ENCODE measurements at regions of chr1 and their contacts with region 1.

Region 1: GRCh38 chr1:184754476-184755225 is at the start of gene EDEM3:
- DNase-seq: peak; percentile 89 to 100 (median 98)
- ATAC-seq: peak; percentile 92 to 95 (median 93)
- H3K4me3 ChIP-seq: peak within 1 kb of the TSS; percentile 84 to 95
- H3K4me3 Mint-ChIP-seq: peak within 1 kb of the TSS; percentile 83 to 90 (median 88)
- H3K27ac ChIP-seq: peak within 1 kb of the TSS; percentile 73
- H3K27ac Mint-ChIP-seq: peak within 1 kb of the TSS; percentile 75 to 88
- H3K4me1 ChIP-seq: peaks cover 5 to 18% of the 10 kb centered on the region in 2 experiments
- H3K4me1 Mint-ChIP-seq: peaks cover 41 to 54% (median 50%) of the 10 kb centered on the region in 3 donors
- H3K27me3 ChIP-seq: no peaks in the 10 kb centered on the region
- H3K27me3 Mint-ChIP-seq: no peaks in the 10 kb centered on the region
- total RNA-seq, gene EDEM3: 21.0 to 44.1 (median 39.1) TPM

Region 2: GRCh38 chr1:184716158-184716557 is 38.5 kb before region 1 on chr1:
- CTCF ChIA-PET with region 1: no interaction called
- POLR2A ChIA-PET with region 1: no interaction called
- DNase-seq: no peak
- ATAC-seq: no peak
- H3K4me3 ChIP-seq: no peak overlapping the region
- H3K4me3 Mint-ChIP-seq: no peak overlapping the region
- H3K27ac ChIP-seq: no peak overlapping the region
- H3K27ac Mint-ChIP-seq: no peak overlapping the region
- H3K4me1 ChIP-seq: no peaks in the 10 kb centered on the region
- H3K4me1 Mint-ChIP-seq: peaks cover 0 to 3% (median 0%) of the 10 kb centered on the region in 3 donors
- H3K27me3 ChIP-seq: no peaks in the 10 kb centered on the region
- H3K27me3 Mint-ChIP-seq: no peaks in the 10 kb centered on the region

Region 3: GRCh38 chr1:184743062-184743756 is 11.4 kb before region 1 on chr1:
- CTCF ChIA-PET with region 1: interaction called in 1 of 2 experiments, 6 read pairs
- POLR2A ChIA-PET with region 1: interaction called in 1 of 2 experiments, 27 read pairs
- DNase-seq: peak in 19 of 35 experiments; percentile 5 to 81 (median 26)
- ATAC-seq: peak; percentile 94 to 99 (median 98)
- H3K4me3 ChIP-seq: no peak overlapping the region
- H3K4me3 Mint-ChIP-seq: peak overlapping the region; percentile 31 to 59 (median 41)
- H3K27ac ChIP-seq: peak overlapping the region; percentile 80
- H3K27ac Mint-ChIP-seq: peak overlapping the region; percentile 89 to 94
- H3K4me1 ChIP-seq: peaks cover 8 to 38% of the 10 kb centered on the region in 2 experiments
- H3K4me1 Mint-ChIP-seq: peaks cover 58 to 75% (median 71%) of the 10 kb centered on the region in 3 donors
- H3K27me3 ChIP-seq: no peaks in the 10 kb centered on the region
- H3K27me3 Mint-ChIP-seq: no peaks in the 10 kb centered on the region

Region 4: GRCh38 chr1:185044981-185045813 is 290.5 kb after region 1 on chr1 and contains the start of gene RNF2:
- CTCF ChIA-PET with region 1: interaction called in 1 of 2 experiments, 5 read pairs
- POLR2A ChIA-PET with region 1: interaction called, 6 to 12 read pairs
- DNase-seq: peak; percentile 65 to 90 (median 79)
- ATAC-seq: peak; percentile 90 to 95 (median 92)
- H3K4me3 ChIP-seq: peak within 1 kb of the TSS; percentile 61 to 76
- H3K4me3 Mint-ChIP-seq: peak within 1 kb of the TSS; percentile 93 to 98 (median 94)
- H3K27ac ChIP-seq: peak within 1 kb of the TSS; percentile 81
- H3K27ac Mint-ChIP-seq: peak within 1 kb of the TSS; percentile 93 to 96
- H3K4me1 ChIP-seq: peaks cover 9 to 10% of the 10 kb centered on the region in 2 experiments
- H3K4me1 Mint-ChIP-seq: peaks cover 49 to 52% (median 50%) of the 10 kb centered on the region in 3 donors
- H3K27me3 ChIP-seq: no peaks in the 10 kb centered on the region
- H3K27me3 Mint-ChIP-seq: no peaks in the 10 kb centered on the region
- total RNA-seq, gene RNF2: 17.0 to 24.0 (median 21.0) TPM